BJ (cell line): ENCODE measurements at regions of chr14 and their contacts with region 1.

Region 1: DNA sequence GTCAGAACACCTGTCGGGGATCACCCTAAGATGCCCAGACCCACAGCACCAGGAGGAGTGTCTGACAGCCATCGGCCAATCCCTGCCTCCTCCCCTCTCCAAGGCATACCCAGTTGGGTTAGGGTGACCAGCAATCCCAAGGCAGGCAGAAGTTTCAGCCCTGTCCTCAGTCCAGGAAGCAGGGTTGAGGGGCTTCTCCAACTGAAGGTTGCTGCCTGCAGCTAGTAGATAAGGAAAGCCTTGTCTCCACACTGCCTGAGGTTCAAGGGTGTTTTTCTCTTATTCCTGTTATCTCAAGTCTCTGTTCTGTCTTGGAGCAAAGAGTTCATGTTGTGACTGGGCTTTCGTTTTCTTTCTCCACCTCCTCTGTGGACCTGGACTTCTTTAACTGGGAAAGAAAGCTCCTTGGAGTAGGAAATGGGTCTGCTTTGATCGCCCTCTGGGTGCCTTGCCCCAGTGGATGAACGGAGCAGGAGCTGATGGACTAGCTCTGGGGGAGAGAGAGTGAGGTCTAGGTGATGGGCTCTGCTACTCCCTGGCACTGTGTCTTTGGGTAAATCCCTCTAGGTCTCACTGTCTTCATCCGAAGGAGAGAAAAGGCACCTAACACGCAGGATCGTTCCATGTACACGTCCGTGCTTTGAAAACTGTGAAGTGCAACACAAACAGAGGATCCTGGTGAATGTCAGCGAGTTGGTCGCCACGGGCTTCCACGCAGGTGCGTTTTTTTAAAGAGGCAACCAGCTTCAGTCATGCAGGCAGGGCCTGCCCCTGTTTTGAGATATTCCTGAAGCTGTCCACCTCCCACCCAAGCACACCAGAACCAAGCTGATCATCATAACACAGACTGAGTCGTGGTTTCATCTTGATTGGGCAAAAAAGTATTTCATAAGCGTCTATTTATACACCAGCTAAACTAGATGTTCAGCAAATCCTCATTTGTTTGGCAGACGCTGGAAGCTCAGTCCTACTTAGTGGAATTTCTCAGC is 52.5 kb upstream of the FOXN3 start:
- DNase-seq: no peak
- H3K4me3 ChIP-seq: no peak overlapping the region
- H3K27me3 ChIP-seq: no peaks in the 10 kb centered on the region
- CTCF ChIP-seq: no peak

Region 2: GRCh38 chr14:89188492-89188891 is 281.0 kb before region 1 on chr14:
- CTCF ChIA-PET with region 1: no interaction called
- POLR2A ChIA-PET with region 1: interaction called, 10 read pairs
- DNase-seq: no peak
- H3K4me3 ChIP-seq: no peak overlapping the region
- H3K27me3 ChIP-seq: no peaks in the 10 kb centered on the region
- CTCF ChIP-seq: no peak

Region 3: GRCh38 chr14:89507521-89507920 is 38.0 kb after region 1 on chr14:
- CTCF ChIA-PET with region 1: no interaction called
- POLR2A ChIA-PET with region 1: no interaction called
- DNase-seq: peak; percentile 52
- H3K4me3 ChIP-seq: no peak overlapping the region
- H3K27me3 ChIP-seq: no peaks in the 10 kb centered on the region
- CTCF ChIP-seq: no peak